ENCODE measurements at regions of chr2 and their contacts with region 1.

Region 1: DNA sequence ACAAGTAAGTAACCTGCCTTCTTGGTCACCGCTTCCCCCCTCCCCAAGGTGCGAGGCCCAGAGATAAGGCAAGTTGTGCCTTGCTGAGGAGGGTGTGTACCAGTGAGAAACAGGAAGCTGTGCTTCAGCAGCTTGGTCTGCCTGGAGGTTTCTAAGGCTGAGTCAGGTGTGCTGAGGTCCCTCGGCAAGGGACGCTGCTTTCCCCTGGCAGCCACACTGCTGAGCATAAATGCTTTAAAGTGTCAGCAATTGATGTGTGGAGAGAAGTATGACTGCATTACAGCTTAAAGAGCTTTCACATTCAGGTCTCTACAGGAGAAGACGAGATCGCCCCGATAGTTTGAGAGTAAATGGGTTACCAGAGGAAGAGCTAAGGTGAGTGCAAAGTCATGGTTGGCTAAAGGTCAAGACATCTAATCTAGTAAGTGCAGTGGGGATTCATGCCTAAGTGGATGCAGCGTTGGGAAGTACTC is 86.9 kb downstream of the LIMS1 start:
- DNase-seq: peak; percentile 53 to 85 (median 73)
- ATAC-seq: peak; percentile 93 to 99 (median 98)
- H3K4me3 ChIP-seq: peak overlapping the region; percentile 68 to 74
- H3K4me3 Mint-ChIP-seq: peak overlapping the region; percentile 82 to 88 (median 84)
- H3K27ac ChIP-seq: peak overlapping the region; percentile 94
- H3K27ac Mint-ChIP-seq: peak overlapping the region; percentile 94
- H3K4me1 ChIP-seq: peaks cover 45 to 62% of the 10 kb centered on the region in 2 experiments
- H3K4me1 Mint-ChIP-seq: peaks cover 76 to 89% (median 85%) of the 10 kb centered on the region in 3 donors
- H3K27me3 ChIP-seq: no peaks in the 10 kb centered on the region
- H3K27me3 Mint-ChIP-seq: no peaks in the 10 kb centered on the region

Region 2: GRCh38 chr2:108607706-108608301 is 13.3 kb before region 1 on chr2:
- CTCF ChIA-PET with region 1: interaction called in 1 of 2 experiments, 13 read pairs
- POLR2A ChIA-PET with region 1: interaction called in 1 of 2 experiments, 16 read pairs
- DNase-seq: peak in 33 of 35 experiments; percentile 22 to 73 (median 44)
- ATAC-seq: peak in 2 of 4 experiments; percentile 41 to 48
- H3K4me3 ChIP-seq: no peak overlapping the region
- H3K4me3 Mint-ChIP-seq: no peak overlapping the region
- H3K27ac ChIP-seq: no peak overlapping the region
- H3K27ac Mint-ChIP-seq: no peak overlapping the region
- H3K4me1 ChIP-seq: peaks cover 0 to 35% of the 10 kb centered on the region in 2 experiments
- H3K4me1 Mint-ChIP-seq: peaks cover 35 to 44% (median 39%) of the 10 kb centered on the region in 3 donors
- H3K27me3 ChIP-seq: no peaks in the 10 kb centered on the region
- H3K27me3 Mint-ChIP-seq: no peaks in the 10 kb centered on the region